CD4-positive, alpha-beta memory T cell (primary cell): ENCODE measurements at regions of chr19 and their contacts with region 1.

Region 1: GRCh38 chr19:13748169-13748828 is 16.0 kb upstream of the MRI1 start:
- DNase-seq: no peak
- H3K4me3 ChIP-seq: peak overlapping the region; percentile 77 to 89
- H3K4me3 Mint-ChIP-seq: peak overlapping the region; percentile 88 to 92 (median 92)
- H3K27ac ChIP-seq: peak overlapping the region; percentile 87
- H3K27ac Mint-ChIP-seq: peak overlapping the region; percentile 83 to 97 (median 96)
- H3K4me1 ChIP-seq: peaks cover 29% of the 10 kb centered on the region
- H3K4me1 Mint-ChIP-seq: peaks cover 15 to 44% (median 18%) of the 10 kb centered on the region in 4 donors
- H3K27me3 ChIP-seq: no peaks in the 10 kb centered on the region
- H3K27me3 Mint-ChIP-seq: no peaks in the 10 kb centered on the region

Region 2: GRCh38 chr19:13731147-13731964 is 16.9 kb before region 1 on chr19:
- CTCF ChIA-PET with region 1: interaction called, 3 read pairs
- POLR2A ChIA-PET with region 1: interaction called, 38 read pairs
- intact Hi-C with region 1: loop called (anchors 1 kb)
- DNase-seq: peak; percentile 92 to 93 (median 92)
- H3K4me3 ChIP-seq: peak overlapping the region; percentile 79 to 87
- H3K4me3 Mint-ChIP-seq: peak overlapping the region; percentile 89 to 97 (median 92)
- H3K27ac ChIP-seq: peak overlapping the region; percentile 59
- H3K27ac Mint-ChIP-seq: peak overlapping the region; percentile 73 to 97 (median 94)
- H3K4me1 ChIP-seq: peaks cover 19% of the 10 kb centered on the region
- H3K4me1 Mint-ChIP-seq: peaks cover 6 to 19% (median 10%) of the 10 kb centered on the region in 4 donors
- H3K27me3 ChIP-seq: no peaks in the 10 kb centered on the region
- H3K27me3 Mint-ChIP-seq: no peaks in the 10 kb centered on the region

Region 3: DNA sequence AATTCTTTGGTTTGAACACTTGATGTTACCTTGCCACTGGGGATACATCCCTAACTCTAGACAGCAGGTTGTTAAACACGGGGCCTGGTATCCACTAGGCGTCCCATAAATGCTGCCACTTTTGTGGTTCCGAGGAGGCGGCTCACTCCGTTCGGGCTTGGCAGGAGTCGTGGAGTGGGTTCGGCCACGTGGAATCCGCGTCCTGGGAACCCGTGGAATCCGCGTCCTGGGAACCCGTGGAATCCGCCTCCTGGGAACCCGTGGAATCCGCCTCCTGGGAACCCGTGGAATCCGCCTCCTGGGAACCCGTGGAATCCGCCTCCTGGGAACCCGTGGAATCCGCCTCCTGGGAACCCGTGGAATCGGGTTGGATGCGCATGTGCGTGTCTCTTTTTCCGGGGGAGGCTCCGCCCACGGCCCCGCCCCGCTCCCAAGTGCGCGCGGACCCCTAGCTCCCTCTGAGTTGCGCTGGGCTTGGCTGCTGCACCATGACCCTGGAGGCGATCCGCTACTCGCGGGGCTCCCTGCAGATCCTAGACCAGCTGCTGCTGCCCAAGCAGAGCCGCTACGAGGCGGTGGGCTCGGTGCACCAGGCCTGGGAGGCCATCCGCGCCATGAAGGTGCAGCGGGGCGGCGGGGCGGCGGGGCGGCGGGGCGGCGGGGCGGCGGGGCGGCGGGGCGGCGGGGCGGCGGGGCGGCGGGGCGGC is 16.0 kb after region 1 on chr19 and contains the start of gene MRI1:
- CTCF ChIA-PET with region 1: no interaction called
- POLR2A ChIA-PET with region 1: interaction called, 27 read pairs
- intact Hi-C with region 1: no loop called
- DNase-seq: peak in 4 of 5 donors; percentile 44 to 57 (median 52)
- H3K4me3 ChIP-seq: peak within 1 kb of the TSS; percentile 42 to 60
- H3K4me3 Mint-ChIP-seq: peak within 1 kb of the TSS; percentile 83 to 91 (median 90)
- H3K27ac ChIP-seq: peak within 1 kb of the TSS; percentile 70
- H3K27ac Mint-ChIP-seq: peak within 1 kb of the TSS; percentile 58 to 95 (median 93)
- H3K4me1 ChIP-seq: peaks cover 16% of the 10 kb centered on the region
- H3K4me1 Mint-ChIP-seq: peaks cover 13 to 27% (median 18%) of the 10 kb centered on the region in 4 donors
- H3K27me3 ChIP-seq: no peaks in the 10 kb centered on the region
- H3K27me3 Mint-ChIP-seq: no peaks in the 10 kb centered on the region
- total RNA-seq, gene MRI1: 46.4 to 52.3 TPM

Region 4: DNA sequence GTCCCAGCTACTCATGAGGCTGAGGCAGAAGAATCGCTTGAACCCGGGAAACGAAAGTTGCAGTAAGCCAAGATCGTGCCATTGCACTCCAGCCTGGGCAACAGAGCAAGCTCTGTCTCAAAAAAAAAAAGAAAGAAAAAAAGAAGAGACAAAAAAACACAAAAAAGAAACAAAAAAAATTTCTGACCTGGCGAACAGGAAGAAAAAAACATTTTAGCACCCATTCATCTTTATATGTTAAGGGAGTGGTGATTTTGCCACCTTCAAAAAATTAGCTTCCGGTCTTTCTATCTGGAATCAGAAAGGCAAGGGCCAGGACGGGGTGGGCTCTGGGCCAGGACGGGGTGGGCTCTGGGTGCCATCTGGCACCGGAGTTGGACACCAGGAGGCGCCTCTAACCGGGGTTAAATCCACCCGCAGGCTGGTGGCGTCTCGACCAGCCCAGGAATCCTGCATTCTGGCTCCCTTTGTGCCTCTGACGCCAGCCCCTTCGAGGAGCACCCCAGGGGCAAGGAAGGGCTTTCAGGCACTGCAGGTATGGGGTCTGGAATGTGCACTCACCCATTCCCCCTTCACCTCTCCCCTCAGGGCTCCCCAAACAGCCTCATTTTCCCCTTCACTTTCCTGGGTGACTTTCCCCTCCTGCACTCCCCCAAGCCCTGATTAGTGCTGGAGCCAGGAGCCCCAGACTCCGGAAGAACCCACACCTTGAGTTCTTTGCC is 36.6 kb after region 1 on chr19:
- CTCF ChIA-PET with region 1: interaction called, 5 read pairs
- POLR2A ChIA-PET with region 1: interaction called, 19 read pairs
- intact Hi-C with region 1: no loop called
- DNase-seq: peak; percentile 63 to 71 (median 66)
- H3K4me3 ChIP-seq: no peak overlapping the region
- H3K4me3 Mint-ChIP-seq: peak overlapping the region in 7 of 8 donors; percentile 21 to 70 (median 64)
- H3K27ac ChIP-seq: no peak overlapping the region
- H3K27ac Mint-ChIP-seq: peak overlapping the region; percentile 12 to 91 (median 80)
- H3K4me1 ChIP-seq: peaks cover 42% of the 10 kb centered on the region
- H3K4me1 Mint-ChIP-seq: peaks cover 12 to 37% (median 24%) of the 10 kb centered on the region in 4 donors
- H3K27me3 ChIP-seq: no peaks in the 10 kb centered on the region
- H3K27me3 Mint-ChIP-seq: no peaks in the 10 kb centered on the region

Region 5: DNA sequence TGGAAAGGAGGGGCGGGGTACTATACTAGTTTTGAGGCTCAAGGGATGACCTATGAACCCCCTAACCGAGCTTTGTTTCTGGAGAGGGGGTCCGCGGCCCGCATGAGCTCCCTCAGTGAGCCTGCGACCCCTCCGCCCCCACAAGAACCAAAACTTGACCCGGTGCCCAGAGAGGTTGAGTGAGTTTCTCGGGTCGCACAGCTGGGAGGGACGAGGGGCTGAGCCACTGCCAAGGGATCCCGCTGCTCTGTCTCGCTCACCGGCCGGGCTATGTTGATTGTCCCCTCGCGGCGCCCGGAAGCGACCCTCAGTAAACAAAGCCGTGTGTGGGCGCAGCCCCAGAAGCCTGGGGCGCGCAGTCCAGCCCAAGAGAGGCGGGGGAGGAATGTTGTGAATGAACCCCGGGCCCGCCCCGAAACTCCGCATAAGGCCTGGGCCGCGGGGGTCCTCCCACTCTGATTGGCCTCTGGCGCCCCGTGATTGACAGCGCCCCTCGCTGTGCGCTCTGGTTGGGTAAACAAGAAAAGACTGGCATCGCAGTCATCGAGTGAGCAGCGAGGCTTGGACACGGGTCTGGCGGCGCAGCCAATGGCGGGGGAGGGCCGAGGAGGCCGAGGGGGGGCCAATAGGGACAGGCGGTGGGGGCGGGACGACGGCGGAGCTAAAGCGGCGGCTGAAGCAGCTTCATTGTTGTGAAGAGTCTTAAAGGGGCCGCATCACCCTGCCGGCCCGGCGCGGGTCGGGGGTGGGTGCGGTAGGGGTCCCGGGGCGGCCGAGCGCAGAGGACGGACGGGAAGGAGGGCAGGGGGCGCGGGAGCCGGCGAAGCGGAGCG is 46.7 kb after region 1 on chr19 and contains the start of gene ZSWIM4:
- CTCF ChIA-PET with region 1: no interaction called
- POLR2A ChIA-PET with region 1: interaction called, 19 read pairs
- intact Hi-C with region 1: loop called (anchors 1 kb)
- DNase-seq: peak; percentile 81 to 85 (median 82)
- H3K4me3 ChIP-seq: peak within 1 kb of the TSS; percentile 61 to 66
- H3K4me3 Mint-ChIP-seq: peak within 1 kb of the TSS; percentile 91 to 97 (median 96)
- H3K27ac ChIP-seq: peak within 1 kb of the TSS; percentile 53
- H3K27ac Mint-ChIP-seq: peak within 1 kb of the TSS; percentile 92 to 98 (median 95)
- H3K4me1 ChIP-seq: peaks cover 23% of the 10 kb centered on the region
- H3K4me1 Mint-ChIP-seq: peaks cover 21 to 39% (median 31%) of the 10 kb centered on the region in 4 donors
- H3K27me3 ChIP-seq: no peaks in the 10 kb centered on the region
- H3K27me3 Mint-ChIP-seq: no peaks in the 10 kb centered on the region
- total RNA-seq, gene ZSWIM4: 6.4 to 6.6 TPM

Region 6: DNA sequence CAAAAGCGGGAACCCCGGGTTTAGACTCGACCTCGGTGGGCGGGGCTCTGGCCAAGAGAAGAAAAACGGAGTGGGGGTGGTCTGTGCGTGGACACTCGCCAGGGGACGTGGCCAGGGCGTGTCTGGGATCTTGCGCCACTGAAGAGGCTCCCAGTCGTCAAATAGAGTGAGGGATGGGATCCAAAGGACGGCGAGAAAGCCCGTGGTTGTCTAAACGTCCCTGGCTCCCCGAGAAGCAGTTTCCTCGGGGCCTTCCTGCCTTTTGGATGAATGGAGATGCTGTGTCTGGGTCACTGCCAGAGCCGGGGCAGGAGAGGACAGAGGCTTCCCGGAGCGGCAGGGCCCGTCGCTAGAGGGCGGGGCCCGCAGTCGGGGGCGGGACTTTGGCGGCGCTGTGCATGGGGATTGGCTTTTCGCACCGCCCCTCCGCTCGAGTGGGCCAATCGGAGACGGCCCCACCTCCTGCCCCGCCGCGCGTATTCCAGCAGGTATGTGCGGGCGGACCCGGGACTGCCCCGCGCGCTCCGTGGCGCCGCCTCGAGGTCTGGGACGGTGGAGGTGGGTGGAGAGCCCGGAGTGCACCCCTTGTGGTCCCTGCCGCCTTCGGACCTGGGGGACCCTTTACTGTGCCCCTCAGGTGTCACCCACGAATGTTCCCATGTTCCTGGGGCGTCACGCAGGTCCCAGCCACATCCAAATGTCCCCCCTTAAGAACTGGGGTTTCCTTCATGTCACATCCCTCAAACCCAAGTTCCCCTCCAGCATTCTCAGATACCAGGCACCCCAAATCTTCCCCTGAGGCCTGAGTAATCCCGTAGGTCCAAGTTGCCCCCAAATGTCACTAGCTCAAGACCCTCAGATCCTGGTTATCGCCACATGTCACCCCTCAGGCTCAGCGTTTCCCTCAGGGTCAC is 85.3 kb after region 1 on chr19:
- CTCF ChIA-PET with region 1: no interaction called
- POLR2A ChIA-PET with region 1: interaction called, 15 read pairs
- intact Hi-C with region 1: no loop called
- DNase-seq: peak; percentile 90 to 94 (median 91)
- H3K4me3 ChIP-seq: peak overlapping the region; percentile 36 to 47
- H3K4me3 Mint-ChIP-seq: peak overlapping the region; percentile 83 to 88 (median 86)
- H3K27ac ChIP-seq: peak overlapping the region; percentile 92
- H3K27ac Mint-ChIP-seq: peak overlapping the region; percentile 96 to 100 (median 97)
- H3K4me1 ChIP-seq: peaks cover 49% of the 10 kb centered on the region
- H3K4me1 Mint-ChIP-seq: peaks cover 17 to 50% (median 30%) of the 10 kb centered on the region in 4 donors
- H3K27me3 ChIP-seq: no peaks in the 10 kb centered on the region
- H3K27me3 Mint-ChIP-seq: no peaks in the 10 kb centered on the region

Region 7: DNA sequence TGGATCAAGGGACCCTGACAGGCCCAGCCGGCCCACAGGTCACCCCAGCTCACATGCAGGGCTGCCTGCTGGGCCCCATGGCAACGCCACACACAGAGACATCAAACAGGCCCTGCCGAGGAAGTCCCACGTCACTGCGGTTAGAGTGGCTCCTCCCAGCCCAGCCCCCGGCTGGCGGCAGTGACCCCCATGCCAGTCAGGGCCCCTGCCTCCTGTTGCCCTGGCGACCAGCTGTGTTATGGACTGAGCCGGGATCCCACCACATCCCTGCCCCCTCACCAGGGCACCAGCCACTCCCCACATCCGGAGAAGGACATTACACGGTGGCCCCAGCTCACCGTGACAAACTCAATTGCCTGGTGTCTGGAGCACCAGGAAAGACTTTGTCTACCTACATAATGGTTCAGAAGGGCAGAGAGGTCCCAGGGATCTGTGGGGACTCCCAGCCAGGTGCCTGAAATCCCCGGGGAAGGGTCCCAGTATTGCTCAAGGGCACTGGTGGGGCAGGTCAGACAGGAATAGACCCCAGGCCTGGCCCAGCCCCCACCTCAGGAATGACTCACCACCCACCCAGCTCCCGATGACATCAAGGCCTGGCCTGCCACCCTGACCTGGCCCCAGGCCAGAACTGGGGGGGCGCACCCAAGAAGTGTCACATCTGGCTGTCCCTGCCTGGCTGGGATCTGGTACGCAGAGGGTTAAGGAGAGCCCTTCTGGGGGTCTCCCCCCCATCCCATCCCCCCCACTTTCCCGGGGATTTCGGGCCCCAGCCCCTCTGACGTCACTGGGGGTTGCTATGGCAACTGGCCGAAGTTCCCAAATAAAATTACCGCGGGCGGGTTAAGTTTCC is 98.5 kb after region 1 on chr19:
- CTCF ChIA-PET with region 1: no interaction called
- POLR2A ChIA-PET with region 1: interaction called, 19 read pairs
- intact Hi-C with region 1: no loop called
- DNase-seq: peak; percentile 99
- H3K4me3 ChIP-seq: peak overlapping the region; percentile 50 to 79
- H3K4me3 Mint-ChIP-seq: peak overlapping the region; percentile 83 to 98 (median 90)
- H3K27ac ChIP-seq: peak overlapping the region; percentile 99
- H3K27ac Mint-ChIP-seq: peak overlapping the region; percentile 99 to 100 (median 100)
- H3K4me1 ChIP-seq: peaks cover 69% of the 10 kb centered on the region
- H3K4me1 Mint-ChIP-seq: peaks cover 33 to 77% (median 50%) of the 10 kb centered on the region in 4 donors
- H3K27me3 ChIP-seq: no peaks in the 10 kb centered on the region
- H3K27me3 Mint-ChIP-seq: peaks cover 0 to 4% of the 10 kb centered on the region in 2 donors